IMR-90 (cell line): ENCODE measurements at regions of chr16 and their contacts with region 1.

Region 1: DNA sequence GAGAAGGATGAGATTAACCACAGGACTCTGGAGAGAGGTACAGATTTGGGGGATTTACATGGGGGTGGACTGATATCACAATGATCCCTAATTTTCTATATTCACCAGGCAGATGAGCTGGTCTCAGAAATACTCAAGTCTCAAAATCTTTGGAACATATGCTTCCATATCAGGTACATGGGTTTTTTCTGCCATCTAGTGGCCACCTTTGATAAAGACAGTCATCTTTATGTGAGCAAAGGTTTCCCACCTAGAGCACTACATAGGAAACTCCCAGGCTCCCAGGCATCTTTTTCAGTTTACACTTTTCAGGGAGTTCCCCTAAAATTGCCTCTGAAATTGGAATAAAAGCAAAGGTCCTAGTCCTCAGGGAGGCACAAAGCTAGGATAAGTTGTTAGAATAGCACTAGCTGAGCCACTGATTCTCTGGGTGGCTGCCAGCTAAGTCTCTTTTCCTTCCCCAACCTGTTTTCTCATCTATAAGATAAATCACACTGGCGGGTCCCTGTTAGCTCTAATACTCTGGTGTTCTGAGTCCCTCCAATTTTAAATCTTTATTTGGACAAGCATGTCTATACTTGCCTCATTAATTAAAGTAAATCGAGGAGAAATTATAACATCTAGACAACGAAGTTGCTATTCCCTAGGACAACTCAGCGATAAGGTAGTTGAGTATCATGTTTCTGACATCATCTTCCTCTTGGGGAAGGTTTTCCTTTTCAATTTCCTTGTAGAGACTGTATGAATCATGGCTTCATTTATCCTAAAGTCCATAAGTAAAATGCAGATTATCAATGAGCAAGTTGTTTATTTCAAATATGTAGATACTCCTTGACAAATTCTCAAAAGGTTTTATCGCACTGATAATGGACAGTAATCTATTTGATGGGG is 19.0 kb upstream of the MON1B start:
- DNase-seq: peak; percentile 59
- ATAC-seq: peak; percentile 85
- H3K4me3 ChIP-seq: no peak overlapping the region
- H3K27ac ChIP-seq: no peak overlapping the region
- H3K4me1 ChIP-seq: no peaks in the 10 kb centered on the region
- H3K27me3 ChIP-seq: peaks cover 1% of the 10 kb centered on the region; the same call in 1 of the 2 replicates
- CTCF ChIP-seq: peak; percentile 68
- POLR2A ChIP-seq: no peak
- RAD21 ChIP-seq: peak; percentile 72

Region 2: DNA sequence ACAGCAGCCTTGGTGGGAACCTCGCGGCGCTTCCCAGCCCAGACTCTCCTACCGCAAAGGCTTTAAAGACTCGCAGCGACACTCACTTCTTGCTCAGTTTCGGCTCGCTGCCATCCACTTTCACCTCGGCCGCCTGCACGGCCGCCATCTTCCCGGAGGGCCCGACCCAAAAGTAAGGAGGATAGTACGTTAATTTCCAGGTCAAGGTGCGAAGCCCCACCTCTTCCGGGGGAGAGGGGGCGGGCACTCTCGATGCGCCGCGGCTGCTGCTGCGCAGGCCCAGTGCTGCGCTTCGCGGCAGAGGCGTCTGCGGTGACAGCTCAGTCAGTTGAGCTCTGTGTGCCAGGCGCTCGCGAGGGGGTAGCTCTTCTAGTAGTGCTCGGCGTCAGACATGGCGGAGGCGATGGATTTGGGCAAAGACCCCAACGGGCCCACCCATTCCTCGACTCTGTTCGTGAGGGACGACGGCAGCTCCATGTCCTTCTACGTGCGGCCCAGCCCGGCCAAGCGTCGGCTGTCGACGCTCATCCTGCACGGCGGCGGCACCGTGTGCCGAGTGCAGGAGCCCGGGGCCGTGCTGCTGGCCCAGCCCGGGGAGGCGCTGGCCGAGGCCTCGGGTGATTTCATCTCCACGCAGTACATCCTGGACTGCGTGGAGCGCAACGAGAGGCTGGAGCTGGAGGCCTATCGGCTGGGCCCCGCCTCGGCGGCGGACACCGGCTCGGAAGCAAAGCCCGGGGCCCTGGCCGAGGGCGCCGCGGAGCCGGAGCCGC is 1524.3 kb before region 1 on chr16 and contains the starts of genes KARS1 and TERF2IP:
- CTCF ChIA-PET with region 1: no interaction called
- POLR2A ChIA-PET with region 1: no interaction called
- dilution Hi-C with region 1: no loop called
- in situ Hi-C with region 1: no loop called
- intact Hi-C with region 1: loop called (anchors 10 kb)
- DNase-seq: peak; percentile 91
- ATAC-seq: peak; percentile 92
- H3K4me3 ChIP-seq: peak within 1 kb of the TSS; percentile 85
- H3K27ac ChIP-seq: peak within 1 kb of the TSS; percentile 96
- H3K4me1 ChIP-seq: peaks cover 5% of the 10 kb centered on the region; the same call in 1 of the 2 replicates
- H3K27me3 ChIP-seq: no peaks in the 10 kb centered on the region
- CTCF ChIP-seq: no peak
- POLR2A ChIP-seq: peak; percentile 95
- RAD21 ChIP-seq: no peak
- total RNA-seq, gene KARS1: 228 and 229 TPM in 2 replicates
- total RNA-seq, gene TERF2IP: 15.4 and 25.6 TPM in 2 replicates

Region 3: GRCh38 chr16:77062878-77063671 is 108.9 kb before region 1 on chr16:
- CTCF ChIA-PET with region 1: no interaction called
- POLR2A ChIA-PET with region 1: no interaction called
- dilution Hi-C with region 1: no loop called
- in situ Hi-C with region 1: no loop called
- intact Hi-C with region 1: no loop called
- DNase-seq: no peak
- ATAC-seq: no peak
- H3K4me3 ChIP-seq: no peak overlapping the region
- H3K27ac ChIP-seq: no peak overlapping the region
- H3K4me1 ChIP-seq: no peaks in the 10 kb centered on the region
- H3K27me3 ChIP-seq: no peaks in the 10 kb centered on the region
- CTCF ChIP-seq: no peak
- POLR2A ChIP-seq: no peak
- RAD21 ChIP-seq: no peak

Region 4: GRCh38 chr16:77157346-77158058 is 14.5 kb before region 1 on chr16:
- CTCF ChIA-PET with region 1: no interaction called
- POLR2A ChIA-PET with region 1: no interaction called
- dilution Hi-C with region 1: no loop called
- in situ Hi-C with region 1: no loop called
- intact Hi-C with region 1: no loop called
- DNase-seq: no peak
- ATAC-seq: no peak
- H3K4me3 ChIP-seq: no peak overlapping the region
- H3K27ac ChIP-seq: no peak overlapping the region
- H3K4me1 ChIP-seq: no peaks in the 10 kb centered on the region
- H3K27me3 ChIP-seq: no peaks in the 10 kb centered on the region
- CTCF ChIP-seq: no peak
- POLR2A ChIP-seq: no peak
- RAD21 ChIP-seq: no peak

Region 5: DNA sequence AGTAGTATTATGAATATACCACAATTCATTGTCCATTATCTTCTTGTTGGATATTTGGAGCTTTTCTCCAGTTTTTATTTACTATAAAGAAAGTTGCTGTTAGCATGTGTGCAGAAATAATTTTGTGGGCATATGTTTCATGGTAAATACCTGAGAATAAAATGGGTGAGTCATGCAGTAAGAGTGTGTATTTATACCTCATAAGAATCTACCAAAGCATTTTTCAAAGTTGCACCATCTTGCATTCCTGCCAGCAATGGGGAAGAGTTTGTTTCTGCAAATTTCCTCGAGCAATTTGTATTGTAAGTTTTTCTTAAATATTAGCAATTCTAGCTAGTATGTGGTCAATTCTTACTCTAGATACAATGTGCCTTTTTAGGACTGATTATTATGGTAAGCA is 11.1 kb after region 1 on chr16:
- CTCF ChIA-PET with region 1: interaction called, 12 read pairs
- POLR2A ChIA-PET with region 1: no interaction called
- dilution Hi-C with region 1: no loop called
- in situ Hi-C with region 1: no loop called
- intact Hi-C with region 1: no loop called
- DNase-seq: peak; percentile 4
- ATAC-seq: no peak; the same call in 1 of the 2 replicates
- H3K4me3 ChIP-seq: no peak overlapping the region
- H3K27ac ChIP-seq: no peak overlapping the region
- H3K4me1 ChIP-seq: no peaks in the 10 kb centered on the region
- H3K27me3 ChIP-seq: no peaks in the 10 kb centered on the region
- CTCF ChIP-seq: no peak
- POLR2A ChIP-seq: no peak
- RAD21 ChIP-seq: no peak